ENCODE measurements at regions of chr15 and their contacts with region 1.

Region 1: GRCh38 chr15:46589088-46589487 is 954.3 kb downstream of the SQOR start:
- DNase-seq: no peak

Region 2: GRCh38 chr15:46354443-46354842 is 234.6 kb before region 1 on chr15:
- intact Hi-C with region 1: loop called (anchors 5 kb)
- DNase-seq: no peak

Region 3: GRCh38 chr15:46461416-46461815 is 127.7 kb before region 1 on chr15:
- intact Hi-C with region 1: no loop called
- DNase-seq: no peak

Region 4: DNA sequence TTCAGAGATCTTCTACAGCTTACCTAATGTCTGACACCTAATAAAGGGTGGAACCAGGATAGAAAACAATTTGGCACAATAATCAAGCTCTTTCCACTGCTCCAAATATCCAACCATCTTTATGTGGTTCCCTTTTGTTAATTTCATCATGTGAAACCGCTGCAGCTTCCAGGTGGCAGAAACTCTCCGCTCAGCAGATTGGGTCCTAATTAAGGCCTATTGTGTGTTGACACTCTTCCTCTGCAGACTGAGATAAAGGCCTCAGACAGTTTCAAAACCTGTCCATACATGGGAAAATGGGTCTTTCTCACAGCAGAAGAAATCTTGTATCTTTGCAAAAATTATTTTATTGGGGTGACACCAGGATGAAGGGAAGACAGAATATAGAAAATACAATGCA is 125.9 kb after region 1 on chr15:
- intact Hi-C with region 1: no loop called
- DNase-seq: no peak

Measured in cardiac septum (tissue), 1 donor.